CD14-positive monocyte (primary cell): ENCODE measurements at regions of chr7 and their contacts with region 1.

Region 1: DNA sequence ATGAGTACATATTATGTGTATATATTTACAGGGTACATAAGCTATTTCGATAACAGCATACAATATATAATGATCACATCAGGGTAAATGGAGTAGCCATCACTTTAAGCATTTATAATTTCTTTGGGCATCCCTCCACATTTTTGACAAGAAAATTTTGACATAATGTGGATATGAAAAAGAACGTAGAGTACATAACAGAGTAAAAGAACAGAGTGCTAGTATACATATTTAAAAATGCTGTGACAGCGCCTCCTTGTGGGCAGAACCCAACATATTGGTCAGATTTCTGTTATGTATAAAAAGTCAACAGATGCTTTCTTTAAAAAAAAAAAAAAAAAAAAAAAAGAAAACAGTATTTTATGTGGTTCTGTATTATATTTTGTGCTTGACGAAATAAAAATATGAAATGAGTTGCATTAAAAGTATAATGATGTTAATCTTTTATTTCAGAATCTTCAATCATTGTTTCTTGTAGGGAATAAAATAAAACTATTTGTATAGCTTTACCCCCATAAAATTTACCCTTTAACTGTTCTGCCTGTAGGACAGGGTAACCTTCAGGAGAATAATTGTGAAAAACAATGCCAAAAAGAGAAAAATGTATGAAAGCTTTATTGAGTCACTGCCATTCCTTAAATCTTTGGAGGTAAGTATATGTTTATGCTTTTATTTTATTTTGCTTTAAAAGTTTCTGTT is 18.3 kb upstream of the HBP1 start:
- DNase-seq: peak; percentile 67 to 74 (median 70)
- H3K4me3 ChIP-seq: no peak overlapping the region
- H3K4me3 Mint-ChIP-seq: no peak overlapping the region
- H3K27ac ChIP-seq: no peak overlapping the region
- H3K27ac Mint-ChIP-seq: no peak overlapping the region
- H3K4me1 ChIP-seq: no peaks in the 10 kb centered on the region
- H3K4me1 Mint-ChIP-seq: peaks cover 6% of the 10 kb centered on the region
- H3K27me3 ChIP-seq: no peaks in the 10 kb centered on the region
- H3K27me3 Mint-ChIP-seq: no peaks in the 10 kb centered on the region
- CTCF ChIP-seq: peak; percentile 84

Region 2: GRCh38 chr7:106793015-106793975 is 357.2 kb before region 1 on chr7:
- intact Hi-C with region 1: loop called (anchors 5 kb)
- DNase-seq: peak in 2 of 3 donors; percentile 21 to 52
- H3K4me3 ChIP-seq: no peak overlapping the region
- H3K4me3 Mint-ChIP-seq: no peak overlapping the region
- H3K27ac ChIP-seq: no peak overlapping the region
- H3K27ac Mint-ChIP-seq: no peak overlapping the region
- H3K4me1 ChIP-seq: no peaks in the 10 kb centered on the region
- H3K4me1 Mint-ChIP-seq: no peaks in the 10 kb centered on the region
- H3K27me3 ChIP-seq: no peaks in the 10 kb centered on the region
- H3K27me3 Mint-ChIP-seq: peaks cover 1 to 5% (median 4%) of the 10 kb centered on the region in 3 donors
- CTCF ChIP-seq: peak; percentile 88

Region 3: GRCh38 chr7:106887421-106887820 is 263.1 kb before region 1 on chr7:
- intact Hi-C with region 1: no loop called
- DNase-seq: no peak
- H3K4me3 ChIP-seq: no peak overlapping the region
- H3K4me3 Mint-ChIP-seq: no peak overlapping the region
- H3K27ac ChIP-seq: peak overlapping the region in 1 of 2 donors; percentile 9
- H3K27ac Mint-ChIP-seq: peak overlapping the region in 5 of 7 donors; percentile 1 to 79 (median 47)
- H3K4me1 ChIP-seq: no peaks in the 10 kb centered on the region
- H3K4me1 Mint-ChIP-seq: peaks cover 6% of the 10 kb centered on the region
- H3K27me3 ChIP-seq: no peaks in the 10 kb centered on the region
- H3K27me3 Mint-ChIP-seq: no peaks in the 10 kb centered on the region
- CTCF ChIP-seq: no peak

Region 4: DNA sequence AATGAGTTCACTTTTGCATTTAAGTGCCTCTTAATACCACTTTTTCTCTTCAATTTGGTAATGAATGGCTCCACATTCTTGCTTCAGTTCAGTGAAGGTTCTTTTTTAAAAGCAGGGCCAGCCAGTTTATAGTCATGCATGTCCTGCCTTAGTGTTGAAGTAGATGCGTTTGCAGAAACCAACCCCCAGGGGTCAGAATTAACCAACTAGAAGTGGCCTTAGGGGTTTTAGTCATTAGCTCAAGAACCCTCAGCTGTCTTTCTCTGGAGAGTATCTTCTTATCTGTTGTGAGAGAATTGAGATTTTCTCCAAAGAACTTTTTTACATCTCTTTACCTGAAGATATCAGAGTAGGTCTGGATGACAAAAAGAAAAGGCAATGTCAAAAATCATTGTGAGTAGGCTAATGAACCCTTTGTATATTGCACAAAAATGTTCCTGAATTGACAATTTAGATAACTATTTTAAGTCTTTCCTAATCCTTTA is 203.2 kb before region 1 on chr7:
- intact Hi-C with region 1: loop called (anchors 2 to 5 kb)
- DNase-seq: peak; percentile 56 to 68 (median 66)
- H3K4me3 ChIP-seq: no peak overlapping the region
- H3K4me3 Mint-ChIP-seq: no peak overlapping the region
- H3K27ac ChIP-seq: no peak overlapping the region
- H3K27ac Mint-ChIP-seq: no peak overlapping the region
- H3K4me1 ChIP-seq: peaks cover 3 to 5% of the 10 kb centered on the region in 2 donors
- H3K4me1 Mint-ChIP-seq: peaks cover 4% of the 10 kb centered on the region
- H3K27me3 ChIP-seq: no peaks in the 10 kb centered on the region
- H3K27me3 Mint-ChIP-seq: peaks cover 0 to 3% (median 2%) of the 10 kb centered on the region in 3 donors
- CTCF ChIP-seq: peak; percentile 77

Region 5: GRCh38 chr7:107208024-107208521 is 57.5 kb after region 1 on chr7:
- intact Hi-C with region 1: no loop called
- DNase-seq: no peak
- H3K4me3 ChIP-seq: no peak overlapping the region
- H3K4me3 Mint-ChIP-seq: no peak overlapping the region
- H3K27ac ChIP-seq: peak overlapping the region in 1 of 2 donors; percentile 23
- H3K27ac Mint-ChIP-seq: peak overlapping the region in 1 of 7 donors; percentile 27
- H3K4me1 ChIP-seq: no peaks in the 10 kb centered on the region
- H3K4me1 Mint-ChIP-seq: peaks cover 5% of the 10 kb centered on the region
- H3K27me3 ChIP-seq: no peaks in the 10 kb centered on the region
- H3K27me3 Mint-ChIP-seq: no peaks in the 10 kb centered on the region
- CTCF ChIP-seq: no peak